Breast epithelium (tissue), 4 donors: ENCODE measurements at regions of chr7 and their contacts with region 1.

Region 1: DNA sequence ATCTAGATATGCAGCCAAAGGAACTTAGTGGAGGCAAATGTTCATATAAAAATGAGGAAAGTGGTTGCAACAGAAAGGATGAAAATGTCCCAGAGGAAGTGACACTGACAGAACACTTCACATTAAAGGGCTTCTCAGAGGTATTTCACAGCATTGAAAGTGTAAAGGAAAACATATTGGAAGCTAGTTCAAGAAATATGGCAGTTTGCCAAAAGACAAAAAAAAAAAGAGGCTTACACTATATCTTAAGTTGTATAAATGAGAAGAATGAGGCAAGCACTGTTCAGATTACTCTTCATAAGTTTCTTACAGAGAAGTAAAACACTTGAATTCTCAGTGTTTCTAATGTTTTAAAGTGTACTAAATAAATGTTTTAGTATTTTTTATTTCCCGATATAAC is 20.1 kb downstream of the RUNDC3B start:
- DNase-seq: no peak
- H3K4me3 ChIP-seq: no peak overlapping the region
- H3K27ac ChIP-seq: no peak overlapping the region
- H3K4me1 ChIP-seq: no peaks in the 10 kb centered on the region
- H3K27me3 ChIP-seq: no peaks in the 10 kb centered on the region
- CTCF ChIP-seq: no peak
- POLR2A ChIP-seq: no peak

Region 2: GRCh38 chr7:86226191-86226590 is 1422.1 kb before region 1 on chr7:
- intact Hi-C with region 1: loop called (anchors 10 kb)
- DNase-seq: no peak
- H3K4me3 ChIP-seq: no peak overlapping the region
- H3K27ac ChIP-seq: no peak overlapping the region
- H3K4me1 ChIP-seq: no peaks in the 10 kb centered on the region
- H3K27me3 ChIP-seq: no peaks in the 10 kb centered on the region
- CTCF ChIP-seq: no peak
- POLR2A ChIP-seq: no peak